Body of pancreas (tissue), 4 donors: ENCODE measurements at regions of chr2 and their contacts with region 1.

Region 1: GRCh38 chr2:98649135-98649991 is 41.0 kb downstream of the UNC50 start:
- DNase-seq: peak; percentile 88 to 92 (median 90)
- ATAC-seq: peak; percentile 92
- H3K4me3 ChIP-seq: no peak overlapping the region
- H3K27ac ChIP-seq: no peak overlapping the region
- H3K4me1 ChIP-seq: peaks cover 16% of the 10 kb centered on the region
- H3K27me3 ChIP-seq: no peaks in the 10 kb centered on the region
- CTCF ChIP-seq: peak; percentile 91 to 99 (median 97)
- POLR2A ChIP-seq: no peak

Region 2: DNA sequence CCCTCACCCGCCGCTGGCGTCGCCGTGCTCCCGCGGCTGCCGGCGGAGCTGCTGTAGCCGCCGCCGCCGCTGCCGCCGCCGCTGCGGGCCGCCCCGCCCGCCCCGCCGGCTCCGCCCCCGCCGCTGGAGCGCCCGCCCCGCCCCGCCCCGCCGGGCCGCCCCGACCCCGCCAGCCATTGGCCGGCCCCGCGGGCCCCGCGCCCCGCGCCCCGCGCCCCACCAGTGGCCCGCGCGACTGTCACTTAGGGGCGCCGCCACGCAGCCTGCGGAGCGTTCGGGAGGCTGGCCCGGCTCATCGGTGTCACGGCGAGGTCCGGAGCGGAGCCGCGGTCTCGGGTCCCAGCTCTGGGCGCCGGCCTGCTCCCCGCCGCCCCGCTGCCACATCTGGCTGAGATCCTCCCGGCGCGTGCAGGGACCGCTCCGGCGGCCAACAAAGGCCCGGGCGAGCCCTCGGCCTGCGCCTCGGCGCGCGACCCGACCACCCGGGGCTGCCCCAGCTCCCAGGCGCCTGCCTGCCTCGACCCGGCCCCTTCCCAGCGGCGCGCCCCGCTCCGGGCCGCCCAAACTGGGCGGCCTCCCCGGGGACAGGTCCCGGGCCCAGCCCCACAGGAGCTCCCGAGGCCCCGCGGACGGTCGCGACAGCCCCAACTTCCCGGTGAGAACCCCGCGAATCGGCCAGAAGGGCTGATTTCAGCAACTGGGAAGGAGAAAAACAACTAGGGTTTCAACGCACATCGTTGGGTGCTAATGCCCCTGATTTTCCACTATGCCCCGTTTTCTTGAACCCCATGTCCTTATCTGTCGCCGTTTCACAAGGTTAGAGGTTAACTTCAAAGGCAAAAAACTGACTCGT is 81.9 kb after region 1 on chr2 and contains the start of gene MGAT4A:
- intact Hi-C with region 1: no loop called
- DNase-seq: peak; percentile 83 to 88 (median 85)
- ATAC-seq: peak; percentile 86
- H3K4me3 ChIP-seq: peak within 1 kb of the TSS; percentile 60 to 64
- H3K27ac ChIP-seq: peak within 1 kb of the TSS; percentile 83 to 97 (median 91)
- H3K4me1 ChIP-seq: peaks cover 43% of the 10 kb centered on the region
- H3K27me3 ChIP-seq: no peaks in the 10 kb centered on the region
- CTCF ChIP-seq: no peak
- POLR2A ChIP-seq: peak; percentile 64 to 78 (median 74)
- total RNA-seq, gene MGAT4A: 40.5 to 72.4 TPM

Region 3: DNA sequence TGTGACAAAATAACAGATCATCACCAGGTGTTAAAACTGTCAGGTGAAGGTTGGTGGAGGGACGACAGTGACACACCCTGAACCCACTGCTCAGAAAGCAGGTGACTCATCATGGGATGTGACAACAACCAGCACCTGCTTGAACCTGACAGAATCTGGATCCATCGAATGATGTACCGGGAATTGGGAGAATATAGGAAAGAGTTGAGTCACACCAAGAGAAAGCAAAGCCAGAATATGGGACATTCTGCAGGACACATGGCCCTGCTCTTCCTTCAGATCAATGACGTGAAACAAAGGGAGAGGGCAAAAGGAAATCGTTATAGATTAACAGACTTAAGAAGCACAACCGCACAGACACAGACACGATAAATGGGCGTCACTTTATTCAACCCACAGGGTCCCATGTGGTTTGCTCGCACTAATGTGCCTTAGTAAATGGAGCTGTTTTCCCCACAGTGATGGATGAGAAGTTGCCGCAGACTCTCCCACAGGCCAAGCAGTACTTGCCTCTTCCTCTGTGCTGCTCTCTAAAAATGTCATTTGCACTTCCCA is 186.5 kb after region 1 on chr2:
- intact Hi-C with region 1: loop called (anchors 2 kb)
- DNase-seq: no peak
- ATAC-seq: no peak
- H3K4me3 ChIP-seq: no peak overlapping the region
- H3K27ac ChIP-seq: no peak overlapping the region
- H3K4me1 ChIP-seq: no peaks in the 10 kb centered on the region
- H3K27me3 ChIP-seq: no peaks in the 10 kb centered on the region
- CTCF ChIP-seq: no peak
- POLR2A ChIP-seq: no peak

Region 4: DNA sequence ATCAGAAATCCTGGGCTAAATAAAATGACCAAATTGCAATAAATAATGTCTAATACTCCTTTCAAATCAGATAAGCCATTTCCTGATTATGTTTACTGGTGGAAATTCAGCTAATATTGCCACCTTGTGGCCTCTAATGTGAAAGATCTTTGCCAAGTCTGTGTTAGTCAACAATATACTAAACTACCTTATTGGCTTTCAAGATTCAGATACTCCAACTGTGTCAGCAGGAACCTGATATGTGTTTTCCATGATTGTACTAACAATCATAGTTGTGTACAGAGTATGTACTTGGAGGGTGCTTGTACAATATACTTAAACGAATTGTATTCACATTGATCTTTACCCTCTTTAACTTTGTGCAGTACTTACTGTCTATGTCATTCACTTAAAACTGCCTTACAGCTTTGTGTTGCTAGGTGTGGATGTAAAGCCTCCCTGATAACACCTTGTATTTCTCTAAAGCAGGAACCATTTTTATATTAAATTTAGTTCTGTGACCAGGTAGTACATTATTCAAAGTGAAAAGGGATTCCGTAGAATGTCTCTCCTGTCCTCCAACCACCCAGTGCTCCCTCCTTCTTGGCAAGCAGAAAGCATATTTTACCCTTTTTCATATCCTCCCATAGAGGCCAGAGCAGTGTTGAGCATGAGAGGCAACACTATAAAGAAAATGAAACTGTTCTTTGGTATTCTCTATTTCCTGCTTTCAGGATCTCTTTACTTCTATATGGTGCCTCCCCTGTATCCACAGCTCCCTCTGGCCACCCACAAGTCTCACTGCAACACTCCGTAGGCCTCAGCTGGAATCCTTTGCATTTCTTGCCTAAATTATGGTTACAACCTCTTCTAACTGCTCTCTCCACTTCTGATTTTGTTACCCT is 417.0 kb after region 1 on chr2:
- intact Hi-C with region 1: loop called (anchors 10 kb)
- DNase-seq: peak in 3 of 4 donors; percentile 31 to 56 (median 40)
- ATAC-seq: peak; percentile 63
- H3K4me3 ChIP-seq: no peak overlapping the region
- H3K27ac ChIP-seq: peak overlapping the region; percentile 33 to 51 (median 37)
- H3K4me1 ChIP-seq: peaks cover 6% of the 10 kb centered on the region
- H3K27me3 ChIP-seq: no peaks in the 10 kb centered on the region
- CTCF ChIP-seq: peak; percentile 31 to 72 (median 53)
- POLR2A ChIP-seq: no peak